ENCODE measurements at regions of chr16 and their contacts with region 1.

Region 1: GRCh38 chr16:425082-425718 is at the start of gene RAB11FIP3:
- DNase-seq: peak; percentile 74
- H3K4me3 Mint-ChIP-seq: peak within 1 kb of the TSS; percentile 73
- H3K27ac Mint-ChIP-seq: peak within 1 kb of the TSS; percentile 71
- H3K4me1 Mint-ChIP-seq: peaks cover 35% of the 10 kb centered on the region
- H3K27me3 Mint-ChIP-seq: no peaks in the 10 kb centered on the region
- CTCF ChIP-seq: no peak
- total RNA-seq, gene RAB11FIP3: 37.5 and 40.6 TPM in 2 replicates

Region 2: DNA sequence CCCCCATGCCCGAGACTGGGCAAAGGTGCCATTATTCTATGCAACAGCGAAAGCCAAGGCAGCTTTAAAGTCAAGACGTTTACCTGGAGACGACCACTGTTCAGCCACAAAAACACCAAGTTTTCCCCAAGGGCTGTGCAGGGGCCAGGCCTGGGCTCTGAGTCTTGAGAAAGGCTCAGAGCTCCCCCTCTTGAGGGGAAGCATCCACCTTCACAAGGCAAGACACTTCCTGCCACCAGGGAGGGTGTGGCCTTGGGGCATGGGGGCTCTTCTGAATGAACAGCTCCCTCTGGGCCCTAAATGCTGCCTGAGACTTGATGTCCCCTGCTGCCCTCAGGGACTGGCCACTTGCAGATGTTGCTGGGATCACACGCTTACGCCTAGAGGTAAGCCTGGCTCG is 115.7 kb before region 1 on chr16:
- CTCF ChIA-PET with region 1: no interaction called
- POLR2A ChIA-PET with region 1: no interaction called
- intact Hi-C with region 1: no loop called
- DNase-seq: no peak
- H3K4me3 Mint-ChIP-seq: no peak overlapping the region
- H3K27ac Mint-ChIP-seq: no peak overlapping the region
- H3K4me1 Mint-ChIP-seq: no peaks in the 10 kb centered on the region
- H3K27me3 Mint-ChIP-seq: no peaks in the 10 kb centered on the region
- CTCF ChIP-seq: no peak

Region 3: DNA sequence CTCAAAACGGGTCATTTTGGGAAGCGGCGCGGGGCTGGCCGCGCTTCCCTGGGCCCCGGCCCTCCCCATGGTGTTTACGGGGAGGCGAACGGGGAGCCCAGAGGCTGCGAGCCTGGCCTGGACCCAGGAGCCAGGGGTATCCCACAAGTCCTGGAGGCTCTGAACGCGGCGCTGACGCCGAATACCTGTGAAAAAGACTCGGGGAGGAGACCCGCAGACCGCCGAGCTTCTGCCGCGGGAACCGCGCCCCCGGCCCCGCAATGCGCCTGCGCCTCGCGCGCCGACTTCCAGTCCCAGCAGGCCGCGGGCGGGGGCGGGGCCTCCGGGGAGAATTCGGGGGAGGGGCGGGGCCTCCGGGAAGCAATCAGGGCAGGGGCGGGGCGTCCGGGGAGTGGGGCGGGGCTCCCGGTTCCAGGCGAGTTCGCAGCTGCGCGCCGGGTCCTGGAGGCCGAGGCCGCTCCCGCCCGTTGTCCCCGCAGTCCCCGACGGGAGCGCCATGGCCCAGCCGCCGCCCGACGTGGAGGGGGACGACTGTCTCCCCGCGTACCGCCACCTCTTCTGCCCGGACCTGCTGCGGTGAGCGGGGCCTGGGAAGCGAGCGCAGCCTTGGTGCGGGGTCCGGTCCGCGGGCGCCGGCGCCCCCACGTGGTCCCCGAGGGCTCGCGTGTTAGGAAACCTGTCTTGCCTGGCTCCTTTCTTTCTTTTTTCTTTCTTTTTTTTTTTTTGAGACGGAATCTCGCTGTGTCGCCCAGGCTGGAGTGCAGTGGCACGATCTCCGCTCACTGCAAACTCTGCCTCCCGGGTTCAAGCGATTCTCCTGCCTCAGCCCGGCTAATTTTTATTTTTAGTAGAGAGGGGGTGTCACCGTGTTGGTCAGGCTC is 23.5 kb before region 1 on chr16 and contains the start of gene DECR2:
- CTCF ChIA-PET with region 1: interaction called, 5 read pairs
- POLR2A ChIA-PET with region 1: interaction called, 35 read pairs
- intact Hi-C with region 1: loop called (anchors 2 kb)
- DNase-seq: peak; percentile 89
- H3K4me3 Mint-ChIP-seq: peak within 1 kb of the TSS; percentile 80
- H3K27ac Mint-ChIP-seq: peak within 1 kb of the TSS; percentile 63
- H3K4me1 Mint-ChIP-seq: peaks cover 7% of the 10 kb centered on the region
- H3K27me3 Mint-ChIP-seq: no peaks in the 10 kb centered on the region
- CTCF ChIP-seq: peak; percentile 55
- total RNA-seq, gene DECR2: 29.0 and 37.2 TPM in 2 replicates

Measured in MCF 10A (cell line).